ENCODE measurements at regions of chr1 and their contacts with region 1.

Region 1: GRCh38 chr1:6701437-6702153 is at the start of gene DNAJC11:
- DNase-seq: peak; percentile 81
- H3K4me3 ChIP-seq: peak within 1 kb of the TSS; percentile 98
- H3K27ac ChIP-seq: peak within 1 kb of the TSS; percentile 86
- H3K27me3 ChIP-seq: no peaks in the 10 kb centered on the region
- CTCF ChIP-seq: peak; percentile 57

Region 2: GRCh38 chr1:6889875-6890480 is 188.4 kb after region 1 on chr1:
- in situ Hi-C with region 1: loop called (anchors 25 kb)
- DNase-seq: peak; percentile 60
- H3K4me3 ChIP-seq: no peak overlapping the region
- H3K27ac ChIP-seq: no peak overlapping the region
- H3K27me3 ChIP-seq: no peaks in the 10 kb centered on the region
- CTCF ChIP-seq: peak; percentile 90

Region 3: GRCh38 chr1:7207875-7208646 is 506.5 kb after region 1 on chr1:
- in situ Hi-C with region 1: loop called (anchors 25 kb)
- DNase-seq: peak; percentile 68
- H3K4me3 ChIP-seq: no peak overlapping the region
- H3K27ac ChIP-seq: no peak overlapping the region
- H3K27me3 ChIP-seq: no peaks in the 10 kb centered on the region
- CTCF ChIP-seq: peak; percentile 90

Measured in brain microvascular endothelial cell (primary cell).